Activated CD8-positive, alpha-beta T cell treated with anti-CD3 and anti-CD28 coated beads, Interleukin-2, amount 10 ng/mL, durations not matched to agents 7 days and 5 days (primary cell): ENCODE measurements at regions of chr6 and their contacts with region 1.

Region 1: DNA sequence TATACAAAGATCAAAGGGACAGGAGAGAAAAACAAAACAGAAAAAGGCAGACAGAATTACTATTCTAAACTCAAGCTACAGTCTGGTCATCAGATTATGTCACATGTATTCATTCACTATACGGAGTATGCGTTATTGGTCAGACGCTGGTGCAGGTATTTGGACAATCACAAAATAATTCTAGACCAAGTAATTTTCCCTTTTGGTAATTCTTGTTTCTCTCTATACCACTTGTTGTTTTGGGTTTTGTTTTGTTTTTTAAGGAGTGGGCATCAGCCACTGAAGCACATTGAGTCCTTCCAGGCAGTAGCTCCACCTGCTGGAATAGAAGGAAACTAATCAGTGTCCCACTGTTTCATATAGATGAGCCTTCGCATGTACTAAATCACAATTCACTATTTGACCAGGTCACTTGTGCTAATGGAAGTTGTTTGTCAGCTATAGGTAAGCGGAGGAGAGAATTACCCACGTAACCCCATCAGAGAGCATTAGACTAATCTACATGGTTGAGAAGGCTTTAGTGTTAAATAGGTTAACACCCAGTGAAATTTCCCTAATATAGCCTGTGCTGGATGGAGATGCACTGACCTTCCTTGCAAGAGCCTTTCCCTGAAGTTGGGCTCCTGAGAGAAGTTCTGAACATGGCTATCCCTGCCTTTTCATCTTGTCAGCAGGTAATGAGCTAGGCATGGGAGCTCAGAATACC is 77.9 kb downstream of the TNFAIP3 start:
- DNase-seq: no peak
- ATAC-seq: peak; percentile 65
- H3K4me3 Mint-ChIP-seq: no peak overlapping the region
- H3K27ac Mint-ChIP-seq: no peak overlapping the region
- H3K4me1 Mint-ChIP-seq: peaks cover 24% of the 10 kb centered on the region
- H3K27me3 Mint-ChIP-seq: no peaks in the 10 kb centered on the region

Region 2: DNA sequence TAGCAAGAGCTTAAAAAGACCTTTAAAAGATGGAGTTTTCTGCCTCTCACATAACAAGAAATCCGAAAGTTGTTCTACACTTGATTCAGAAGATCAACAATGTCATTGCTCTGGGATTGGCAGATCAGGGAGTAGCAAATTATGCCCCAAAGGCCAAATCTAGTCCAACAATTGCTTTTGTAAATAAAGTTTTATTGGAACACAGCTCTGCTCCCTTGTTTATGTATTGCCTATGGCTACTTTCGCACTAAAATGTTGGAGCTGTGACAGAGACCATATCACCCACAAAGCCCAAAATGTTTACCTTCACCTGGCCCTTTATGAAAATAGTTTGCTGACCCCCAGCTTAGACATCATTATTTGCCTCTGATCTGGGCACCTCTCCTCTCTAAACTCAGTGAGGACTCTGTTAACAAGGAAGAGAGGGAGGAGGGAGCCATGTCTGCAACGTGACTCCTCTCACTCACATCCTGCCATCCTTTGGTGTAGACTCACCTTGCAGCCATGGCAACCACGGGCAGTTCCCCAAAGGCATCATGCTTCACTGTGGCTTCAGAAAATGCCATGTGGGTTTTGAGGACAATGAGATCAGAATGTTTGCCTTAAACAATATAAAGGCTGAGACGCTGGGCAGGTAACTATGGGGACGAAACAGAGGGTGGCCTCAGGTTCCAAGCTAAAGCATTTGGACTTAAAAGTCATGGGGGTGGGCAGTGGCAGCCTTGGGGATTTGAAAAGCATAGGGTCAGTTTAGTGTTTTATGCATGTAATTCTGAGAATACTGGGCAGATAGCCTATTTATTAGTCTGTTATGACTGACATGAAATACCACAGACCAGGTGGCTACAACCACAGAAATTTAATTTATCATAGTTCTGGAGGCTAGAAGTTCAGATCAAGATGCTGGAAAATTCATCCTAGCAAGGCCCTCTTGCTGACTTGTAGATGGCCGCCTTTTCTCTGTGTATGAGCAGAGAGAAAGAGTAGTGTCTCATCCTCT is 227.6 kb before region 1 on chr6:
- CTCF ChIA-PET with region 1: interaction called, 10 read pairs
- POLR2A ChIA-PET with region 1: no interaction called
- DNase-seq: peak; percentile 88
- ATAC-seq: peak; percentile 72
- H3K4me3 Mint-ChIP-seq: no peak overlapping the region
- H3K27ac Mint-ChIP-seq: peak overlapping the region; percentile 84
- H3K4me1 Mint-ChIP-seq: peaks cover 55% of the 10 kb centered on the region
- H3K27me3 Mint-ChIP-seq: no peaks in the 10 kb centered on the region

Region 3: GRCh38 chr6:137873273-137873762 is 71.6 kb before region 1 on chr6:
- CTCF ChIA-PET with region 1: interaction called, 555 read pairs
- POLR2A ChIA-PET with region 1: interaction called, 16 read pairs
- DNase-seq: peak; percentile 44
- ATAC-seq: no peak
- H3K4me3 Mint-ChIP-seq: peak overlapping the region; percentile 94
- H3K27ac Mint-ChIP-seq: peak overlapping the region; percentile 42
- H3K4me1 Mint-ChIP-seq: peaks cover 83% of the 10 kb centered on the region
- H3K27me3 Mint-ChIP-seq: no peaks in the 10 kb centered on the region

Region 4: GRCh38 chr6:137927777-137928218 is 17.1 kb before region 1 on chr6:
- CTCF ChIA-PET with region 1: interaction called, 49 read pairs
- POLR2A ChIA-PET with region 1: interaction called, 5 read pairs
- DNase-seq: peak; percentile 87
- ATAC-seq: peak; percentile 99
- H3K4me3 Mint-ChIP-seq: peak overlapping the region; percentile 52
- H3K27ac Mint-ChIP-seq: peak overlapping the region; percentile 69
- H3K4me1 Mint-ChIP-seq: peaks cover 45% of the 10 kb centered on the region
- H3K27me3 Mint-ChIP-seq: no peaks in the 10 kb centered on the region

Region 5: DNA sequence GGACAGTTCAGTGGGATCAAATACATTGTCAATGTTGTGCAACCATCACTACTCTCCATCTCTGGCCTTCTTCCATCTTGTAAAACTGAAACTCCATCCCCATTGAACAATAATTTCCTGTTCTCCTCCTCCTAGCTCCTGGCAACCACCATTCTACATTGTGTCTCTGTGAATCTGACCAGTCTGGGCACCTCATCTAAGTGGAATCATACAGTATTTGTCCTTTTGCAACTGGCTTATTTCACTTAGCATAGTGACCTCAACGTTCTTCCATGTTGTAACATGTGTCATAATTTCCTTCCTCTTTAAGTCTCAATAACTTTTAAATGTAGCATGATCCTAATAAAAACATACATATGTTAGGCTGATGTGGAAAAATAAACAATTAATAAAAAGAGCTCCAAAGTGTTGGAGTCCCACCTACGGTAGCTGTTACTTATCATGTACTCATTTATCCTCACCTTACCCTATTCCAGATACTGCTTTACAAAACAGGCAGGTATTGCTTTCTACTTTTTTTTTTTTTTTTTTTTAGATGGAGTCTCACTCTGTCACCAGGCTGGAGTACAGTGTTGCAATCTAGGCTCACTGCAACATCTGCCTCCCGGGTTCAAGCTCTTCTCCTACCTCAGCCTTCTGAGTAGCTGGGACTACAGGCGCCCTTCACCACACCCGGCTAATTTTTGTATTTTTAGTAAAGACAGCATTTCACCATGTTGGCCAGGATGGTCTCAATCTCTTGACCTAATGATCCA is 14.0 kb after region 1 on chr6:
- CTCF ChIA-PET with region 1: interaction called, 22 read pairs
- POLR2A ChIA-PET with region 1: no interaction called
- DNase-seq: no peak
- ATAC-seq: no peak
- H3K4me3 Mint-ChIP-seq: no peak overlapping the region
- H3K27ac Mint-ChIP-seq: no peak overlapping the region
- H3K4me1 Mint-ChIP-seq: peaks cover 13% of the 10 kb centered on the region
- H3K27me3 Mint-ChIP-seq: no peaks in the 10 kb centered on the region

Region 6: GRCh38 chr6:137975188-137975940 is 30.4 kb after region 1 on chr6:
- CTCF ChIA-PET with region 1: interaction called, 68 read pairs
- POLR2A ChIA-PET with region 1: interaction called, 5 read pairs
- DNase-seq: peak; percentile 59
- ATAC-seq: peak; percentile 86
- H3K4me3 Mint-ChIP-seq: peak overlapping the region; percentile 76
- H3K27ac Mint-ChIP-seq: peak overlapping the region; percentile 92
- H3K4me1 Mint-ChIP-seq: peaks cover 51% of the 10 kb centered on the region
- H3K27me3 Mint-ChIP-seq: no peaks in the 10 kb centered on the region

Region 7: GRCh38 chr6:138129190-138129589 is 184.2 kb after region 1 on chr6:
- CTCF ChIA-PET with region 1: no interaction called
- POLR2A ChIA-PET with region 1: no interaction called
- DNase-seq: no peak
- ATAC-seq: no peak
- H3K4me3 Mint-ChIP-seq: no peak overlapping the region
- H3K27ac Mint-ChIP-seq: no peak overlapping the region
- H3K4me1 Mint-ChIP-seq: no peaks in the 10 kb centered on the region
- H3K27me3 Mint-ChIP-seq: peaks cover 24% of the 10 kb centered on the region